Mammary epithelial cell (primary cell): ENCODE measurements at regions of chr12 and their contacts with region 1.

Region 1: GRCh38 chr12:20588042-20588441 is 107.1 kb upstream of the SLCO1C1 start:
- DNase-seq: no peak
- H3K4me3 ChIP-seq: no peak overlapping the region
- H3K27ac ChIP-seq: no peak overlapping the region
- H3K4me1 ChIP-seq: no peaks in the 10 kb centered on the region
- H3K27me3 ChIP-seq: no peaks in the 10 kb centered on the region
- CTCF ChIP-seq: no peak

Region 2: DNA sequence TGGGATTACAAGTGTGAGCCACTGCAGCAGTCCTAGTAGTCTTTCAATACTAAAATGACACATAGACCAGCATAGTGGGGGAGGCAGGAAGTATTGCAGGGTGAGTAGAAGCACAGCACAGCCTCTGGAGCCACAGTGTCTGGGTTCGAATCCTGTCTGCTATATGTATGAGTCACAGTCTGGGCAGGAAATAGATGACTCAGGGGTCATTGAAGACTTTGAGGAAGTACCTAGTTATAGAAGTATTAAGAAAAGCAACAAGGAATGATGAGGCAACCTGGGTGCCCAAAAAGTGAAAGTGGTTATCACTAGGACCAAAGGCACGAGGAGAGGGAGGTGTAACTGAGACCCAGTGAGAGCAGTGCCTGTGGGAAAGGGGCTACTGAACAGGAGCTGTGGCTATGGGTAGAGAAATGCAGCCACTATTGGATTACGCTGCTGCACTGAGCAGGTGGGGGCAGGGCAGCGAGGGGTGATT is 95.8 kb before region 1 on chr12:
- CTCF ChIA-PET with region 1: no interaction called
- dilution Hi-C with region 1: no loop called
- in situ Hi-C with region 1: loop called in 1 of 2 experiments (anchors 25 kb)
- intact Hi-C with region 1: no loop called
- DNase-seq: peak; percentile 1
- H3K4me3 ChIP-seq: no peak overlapping the region
- H3K27ac ChIP-seq: no peak overlapping the region
- H3K4me1 ChIP-seq: no peaks in the 10 kb centered on the region
- H3K27me3 ChIP-seq: no peaks in the 10 kb centered on the region
- CTCF ChIP-seq: no peak